HEK293 (cell line): ENCODE measurements at regions of chr11 and their contacts with region 1.

Region 1: GRCh38 chr11:6862961-6863360 is at the start of gene OR10A2:
- H3K4me3 ChIP-seq: no peak within 1 kb of the TSS
- H3K27ac ChIP-seq: no peak within 1 kb of the TSS
- H3K4me1 ChIP-seq: no peaks in the 10 kb centered on the region
- CTCF ChIP-seq: no peak

Region 2: GRCh38 chr11:6928916-6929315 is 66.0 kb after region 1 on chr11:
- CTCF ChIA-PET with region 1: no interaction called
- POLR2A ChIA-PET with region 1: interaction called, 10 read pairs
- H3K4me3 ChIP-seq: no peak overlapping the region
- H3K27ac ChIP-seq: no peak overlapping the region
- H3K4me1 ChIP-seq: no peaks in the 10 kb centered on the region
- CTCF ChIP-seq: no peak